ENCODE measurements at regions of chr5 and their contacts with region 1.

Region 1: GRCh38 chr5:178626484-178627258 is at the start of gene CLK4:
- DNase-seq: peak; percentile 99
- H3K4me3 Mint-ChIP-seq: peak within 1 kb of the TSS; percentile 90
- H3K27ac Mint-ChIP-seq: peak within 1 kb of the TSS; percentile 99
- H3K4me1 Mint-ChIP-seq: peaks cover 31% of the 10 kb centered on the region
- H3K27me3 Mint-ChIP-seq: peaks cover 10% of the 10 kb centered on the region
- total RNA-seq, gene CLK4: 26.0 and 26.1 TPM in 2 replicates

Region 2: GRCh38 chr5:178232124-178232919 is 394.3 kb before region 1 on chr5 and contains the start of gene PHYKPL:
- intact Hi-C with region 1: loop called (anchors 5 kb)
- DNase-seq: peak; percentile 93
- H3K4me3 Mint-ChIP-seq: peak within 1 kb of the TSS; percentile 91
- H3K27ac Mint-ChIP-seq: peak within 1 kb of the TSS; percentile 87
- H3K4me1 Mint-ChIP-seq: peaks cover 51% of the 10 kb centered on the region
- H3K27me3 Mint-ChIP-seq: no peaks in the 10 kb centered on the region
- total RNA-seq, gene PHYKPL: 77.8 and 85.9 TPM in 2 replicates

Region 3: GRCh38 chr5:178388386-178389025 is 238.2 kb before region 1 on chr5:
- intact Hi-C with region 1: no loop called
- DNase-seq: no peak
- H3K4me3 Mint-ChIP-seq: no peak overlapping the region
- H3K27ac Mint-ChIP-seq: no peak overlapping the region
- H3K4me1 Mint-ChIP-seq: no peaks in the 10 kb centered on the region
- H3K27me3 Mint-ChIP-seq: no peaks in the 10 kb centered on the region

Region 4: DNA sequence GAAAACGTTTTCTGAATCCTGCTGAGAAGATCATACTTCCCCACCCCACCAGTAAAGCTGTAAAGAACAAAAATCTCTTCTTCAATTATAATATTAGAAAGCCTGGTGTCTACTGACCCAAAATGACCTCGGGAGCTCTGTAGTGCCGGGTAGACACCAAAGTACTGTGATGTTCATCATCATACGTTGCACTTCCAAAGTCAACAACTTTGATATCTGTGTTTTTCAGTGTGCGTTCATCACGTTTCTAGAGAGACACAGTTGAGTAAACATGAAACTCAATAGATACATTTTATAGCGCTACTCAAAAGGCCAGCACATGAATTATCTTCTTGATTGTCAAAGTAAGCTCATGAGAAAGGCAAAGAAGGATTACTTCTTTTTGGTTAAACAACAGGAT is 14.4 kb before region 1 on chr5:
- intact Hi-C with region 1: loop called (anchors 1 kb)
- DNase-seq: no peak
- H3K4me3 Mint-ChIP-seq: no peak overlapping the region
- H3K27ac Mint-ChIP-seq: no peak overlapping the region
- H3K4me1 Mint-ChIP-seq: peaks cover 11% of the 10 kb centered on the region
- H3K27me3 Mint-ChIP-seq: no peaks in the 10 kb centered on the region

Region 5: DNA sequence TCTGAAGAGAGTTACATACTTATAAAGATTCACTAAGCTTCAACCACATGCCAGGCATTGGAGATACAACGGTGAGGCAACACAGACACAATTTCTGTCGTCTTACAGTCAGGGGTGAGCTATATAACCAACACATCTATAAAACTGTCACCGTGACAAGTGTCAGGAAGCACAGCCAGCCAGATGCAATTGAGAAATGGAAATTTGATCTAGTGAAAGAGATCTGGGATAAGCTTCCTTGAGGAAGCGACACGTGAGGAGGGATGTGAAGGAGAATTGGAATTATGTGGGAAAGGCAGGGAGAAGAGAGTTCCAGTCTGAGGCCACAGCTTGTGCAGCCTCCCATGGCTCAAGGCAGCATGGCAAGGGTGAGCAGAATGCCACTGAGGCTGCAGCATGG is 182.2 kb after region 1 on chr5:
- intact Hi-C with region 1: no loop called
- DNase-seq: no peak
- H3K4me3 Mint-ChIP-seq: no peak overlapping the region
- H3K27ac Mint-ChIP-seq: no peak overlapping the region
- H3K4me1 Mint-ChIP-seq: no peaks in the 10 kb centered on the region
- H3K27me3 Mint-ChIP-seq: no peaks in the 10 kb centered on the region

Region 6: GRCh38 chr5:178859625-178860531 is 233.2 kb after region 1 on chr5 and contains the start of gene ZNF354B:
- intact Hi-C with region 1: loop called (anchors 1 kb)
- DNase-seq: peak; percentile 95
- H3K4me3 Mint-ChIP-seq: peak within 1 kb of the TSS; percentile 89
- H3K27ac Mint-ChIP-seq: peak within 1 kb of the TSS; percentile 83
- H3K4me1 Mint-ChIP-seq: peaks cover 16% of the 10 kb centered on the region
- H3K27me3 Mint-ChIP-seq: no peaks in the 10 kb centered on the region
- total RNA-seq, gene ZNF354B: 13.5 and 17.0 TPM in 2 replicates

Region 7: GRCh38 chr5:180071531-180072255 is 1445.0 kb after region 1 on chr5 and contains the start of gene RNF130:
- intact Hi-C with region 1: loop called (anchors 5 kb)
- DNase-seq: peak; percentile 95
- H3K4me3 Mint-ChIP-seq: peak within 1 kb of the TSS; percentile 77
- H3K27ac Mint-ChIP-seq: peak within 1 kb of the TSS; percentile 36
- H3K4me1 Mint-ChIP-seq: peaks cover 9% of the 10 kb centered on the region
- H3K27me3 Mint-ChIP-seq: peaks cover 41% of the 10 kb centered on the region
- total RNA-seq, gene RNF130: 7.3 and 8.9 TPM in 2 replicates